Activated B cell treated with CpG ODN at 0.5 μM for 24 hours (primary cell): ENCODE measurements at regions of chr11 and their contacts with region 1.

Region 1: DNA sequence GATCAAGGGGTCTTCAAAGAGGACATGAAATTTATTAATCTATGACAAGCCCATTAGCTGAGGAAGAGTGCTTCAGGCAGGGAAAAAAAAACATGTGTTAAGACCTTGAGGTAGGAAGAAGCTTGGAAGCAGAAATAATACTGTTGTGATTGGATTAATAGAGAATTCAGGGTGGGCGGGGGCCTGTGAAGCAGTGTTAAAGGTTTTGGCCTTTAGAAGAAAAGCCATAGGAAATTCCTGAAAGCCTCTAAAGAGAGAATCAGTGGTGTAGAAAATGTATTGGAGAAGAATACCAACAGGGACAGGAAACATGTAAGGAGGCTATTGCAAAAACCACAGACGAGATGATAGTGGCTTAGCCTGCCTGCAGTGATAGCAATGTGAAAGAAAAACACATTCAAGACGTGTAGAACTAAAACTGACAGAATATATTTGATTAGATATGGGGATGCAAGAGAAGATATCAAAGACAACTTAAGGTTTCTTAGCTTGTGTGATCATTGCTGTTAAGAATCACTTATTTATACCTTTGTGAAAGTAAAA is 404.4 kb upstream of the ANO3 start:
- DNase-seq: no peak
- ATAC-seq: no peak
- H3K4me3 Mint-ChIP-seq: no peak overlapping the region
- H3K27ac Mint-ChIP-seq: no peak overlapping the region
- H3K4me1 Mint-ChIP-seq: no peaks in the 10 kb centered on the region
- H3K27me3 Mint-ChIP-seq: no peaks in the 10 kb centered on the region
- CTCF ChIP-seq: no peak

Region 2: DNA sequence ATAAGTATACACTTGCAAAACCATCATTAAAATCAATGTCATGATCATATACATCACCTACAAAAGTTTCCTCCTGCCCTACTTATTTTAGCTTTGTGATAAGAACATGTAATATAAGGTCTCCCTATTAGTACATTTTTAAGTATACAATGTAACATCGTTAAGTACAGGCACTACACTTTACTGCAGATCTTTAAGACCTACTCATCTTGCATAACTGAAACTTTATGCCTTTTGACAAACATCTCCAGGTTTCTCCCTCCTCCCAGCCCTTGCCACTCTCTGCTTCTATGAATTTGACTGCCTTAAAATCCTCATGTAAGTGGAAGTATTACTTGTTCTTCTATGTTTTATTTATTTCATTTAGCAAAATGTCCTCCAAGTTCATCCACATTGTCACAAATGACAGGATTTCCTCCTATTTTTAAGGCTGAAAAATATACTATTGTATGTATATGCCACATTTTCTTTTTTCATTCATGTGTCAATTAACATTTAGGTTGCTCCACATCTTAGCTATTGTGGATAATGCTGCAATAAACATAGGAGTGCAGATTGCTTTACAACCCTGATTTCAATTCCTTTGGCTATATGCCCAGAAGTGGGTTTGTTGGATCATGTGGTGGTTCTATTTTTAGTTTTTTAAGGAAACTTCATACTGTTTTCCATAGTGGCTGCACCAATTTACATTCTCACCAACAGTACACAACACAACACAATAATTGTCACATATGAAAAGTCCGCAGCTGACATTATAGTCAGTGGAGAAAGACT is 66.6 kb before region 1 on chr11:
- CTCF ChIA-PET with region 1: no interaction called
- POLR2A ChIA-PET with region 1: no interaction called
- intact Hi-C with region 1: loop called (anchors 10 kb)
- DNase-seq: no peak
- ATAC-seq: no peak
- H3K4me3 Mint-ChIP-seq: no peak overlapping the region
- H3K27ac Mint-ChIP-seq: no peak overlapping the region
- H3K4me1 Mint-ChIP-seq: no peaks in the 10 kb centered on the region
- H3K27me3 Mint-ChIP-seq: no peaks in the 10 kb centered on the region
- CTCF ChIP-seq: no peak

Region 3: DNA sequence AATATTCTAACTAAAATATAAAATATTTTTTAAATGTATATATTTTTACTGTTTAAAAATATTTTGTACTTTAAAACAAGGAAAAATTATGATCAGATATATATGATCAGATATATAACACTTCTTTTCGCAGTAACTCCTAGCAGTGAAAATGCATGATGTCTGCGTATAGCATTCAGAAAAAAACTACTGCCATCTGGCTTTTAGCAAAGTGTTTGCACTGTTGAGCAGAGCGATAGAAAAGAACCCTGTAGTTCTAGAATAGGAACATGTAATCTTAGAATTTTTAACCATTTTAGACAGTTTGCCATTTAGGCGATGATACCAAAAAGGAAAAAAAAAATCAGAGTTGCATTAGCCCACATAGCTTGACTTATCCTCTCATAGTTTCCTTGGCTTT is 34.1 kb after region 1 on chr11:
- CTCF ChIA-PET with region 1: no interaction called
- POLR2A ChIA-PET with region 1: no interaction called
- intact Hi-C with region 1: no loop called
- DNase-seq: no peak
- ATAC-seq: no peak
- H3K4me3 Mint-ChIP-seq: no peak overlapping the region
- H3K27ac Mint-ChIP-seq: no peak overlapping the region
- H3K4me1 Mint-ChIP-seq: no peaks in the 10 kb centered on the region
- H3K27me3 Mint-ChIP-seq: peaks cover 2% of the 10 kb centered on the region
- CTCF ChIP-seq: no peak